ENCODE measurements at regions of chr2 and their contacts with region 1.

Region 1: GRCh38 chr2:207188626-207189419 is 23.1 kb upstream of the KLF7 start:
- DNase-seq: no peak
- ATAC-seq: peak in 2 of 4 donors; percentile 36 to 58
- H3K4me3 ChIP-seq: no peak overlapping the region
- H3K27ac ChIP-seq: no peak overlapping the region
- H3K4me1 ChIP-seq: peaks cover 0 to 8% (median 0%) of the 10 kb centered on the region in 12 donors
- H3K27me3 ChIP-seq: no peaks in the 10 kb centered on the region
- CTCF ChIP-seq: no peak
- POLR2A ChIP-seq: no peak

Region 2: GRCh38 chr2:207202645-207203044 is 13.8 kb after region 1 on chr2:
- intact Hi-C with region 1: no loop called
- DNase-seq: no peak
- ATAC-seq: no peak
- H3K4me3 ChIP-seq: no peak overlapping the region
- H3K27ac ChIP-seq: no peak overlapping the region
- H3K4me1 ChIP-seq: no peaks in the 10 kb centered on the region
- H3K27me3 ChIP-seq: no peaks in the 10 kb centered on the region
- CTCF ChIP-seq: no peak
- POLR2A ChIP-seq: no peak

Region 3: DNA sequence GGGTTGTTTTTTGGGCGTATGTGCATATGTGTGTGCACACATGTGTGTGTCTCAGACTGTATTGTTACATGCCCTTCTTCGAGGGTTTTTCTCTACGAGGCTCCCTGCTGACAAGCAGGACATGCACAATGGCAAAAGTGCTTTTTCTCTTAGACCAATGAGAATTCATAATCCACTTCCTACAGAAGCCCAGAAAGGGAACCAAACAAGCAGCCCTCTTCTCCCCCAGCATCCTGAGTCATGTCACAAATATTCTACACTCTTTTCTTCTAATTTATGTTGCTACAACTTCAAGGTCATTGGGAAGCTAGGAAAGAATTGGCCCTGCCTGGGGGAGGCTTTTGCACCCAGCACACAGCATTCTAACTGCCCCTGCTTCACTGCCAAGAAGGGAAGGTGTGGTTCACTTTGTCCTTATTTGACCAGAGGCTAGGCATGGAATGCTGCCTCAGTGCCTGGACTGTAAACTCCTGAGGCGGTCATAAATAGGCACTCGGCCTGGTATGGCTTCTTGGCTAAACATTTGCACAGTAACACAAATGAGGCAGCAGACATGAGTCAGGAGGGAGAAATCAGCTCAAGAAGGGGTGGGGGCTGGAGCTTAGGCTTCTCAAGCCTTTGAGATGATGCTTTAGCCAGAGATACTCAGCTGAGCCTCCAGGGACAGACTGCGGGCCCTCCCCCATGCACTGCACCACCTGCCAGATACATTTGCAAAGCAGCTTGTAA is 69.6 kb after region 1 on chr2:
- intact Hi-C with region 1: loop called in 1 of 10 experiments (anchors 10 kb)
- DNase-seq: peak in 4 of 5 donors; percentile 51 to 84 (median 62)
- ATAC-seq: peak; percentile 74 to 90 (median 89)
- H3K4me3 ChIP-seq: no peak overlapping the region
- H3K27ac ChIP-seq: peak overlapping the region; percentile 30 to 77 (median 56)
- H3K4me1 ChIP-seq: peaks cover 15 to 65% (median 42%) of the 10 kb centered on the region in 12 donors
- H3K27me3 ChIP-seq: no peaks in the 10 kb centered on the region
- CTCF ChIP-seq: no peak
- POLR2A ChIP-seq: no peak